ENCODE measurements at regions of chr3 and their contacts with region 1.

Region 1: GRCh38 chr3:9430733-9431132 is 33.3 kb downstream of the SETD5 start:
- DNase-seq: no peak
- H3K4me3 ChIP-seq: no peak overlapping the region
- H3K27ac ChIP-seq: no peak overlapping the region
- H3K4me1 ChIP-seq: peaks cover 3% of the 10 kb centered on the region
- H3K27me3 ChIP-seq: no peaks in the 10 kb centered on the region
- CTCF ChIP-seq: no peak

Region 2: GRCh38 chr3:9369508-9369907 is 61.2 kb before region 1 on chr3:
- CTCF ChIA-PET with region 1: no interaction called
- dilution Hi-C with region 1: no loop called
- in situ Hi-C with region 1: loop called (anchors 5 to 10 kb)
- intact Hi-C with region 1: no loop called
- DNase-seq: no peak
- H3K4me3 ChIP-seq: no peak overlapping the region
- H3K27ac ChIP-seq: no peak overlapping the region
- H3K4me1 ChIP-seq: no peaks in the 10 kb centered on the region
- H3K27me3 ChIP-seq: no peaks in the 10 kb centered on the region
- CTCF ChIP-seq: no peak

Region 3: GRCh38 chr3:9396700-9397521 is 33.8 kb before region 1 on chr3:
- CTCF ChIA-PET with region 1: no interaction called
- dilution Hi-C with region 1: no loop called
- in situ Hi-C with region 1: no loop called
- intact Hi-C with region 1: no loop called
- DNase-seq: peak; percentile 99
- H3K4me3 ChIP-seq: peak overlapping the region; percentile 51 to 81 (median 67)
- H3K27ac ChIP-seq: peak overlapping the region; percentile 87
- H3K4me1 ChIP-seq: peaks cover 27% of the 10 kb centered on the region
- H3K27me3 ChIP-seq: no peaks in the 10 kb centered on the region
- CTCF ChIP-seq: no peak

Region 4: GRCh38 chr3:9473496-9474065 is 42.8 kb after region 1 on chr3:
- CTCF ChIA-PET with region 1: no interaction called
- dilution Hi-C with region 1: no loop called
- in situ Hi-C with region 1: no loop called
- intact Hi-C with region 1: loop called (anchors 5 kb)
- DNase-seq: no peak
- H3K4me3 ChIP-seq: no peak overlapping the region
- H3K27ac ChIP-seq: no peak overlapping the region
- H3K4me1 ChIP-seq: no peaks in the 10 kb centered on the region
- H3K27me3 ChIP-seq: no peaks in the 10 kb centered on the region
- CTCF ChIP-seq: no peak